ENCODE measurements at regions of chr6 and their contacts with region 1.

Region 1: DNA sequence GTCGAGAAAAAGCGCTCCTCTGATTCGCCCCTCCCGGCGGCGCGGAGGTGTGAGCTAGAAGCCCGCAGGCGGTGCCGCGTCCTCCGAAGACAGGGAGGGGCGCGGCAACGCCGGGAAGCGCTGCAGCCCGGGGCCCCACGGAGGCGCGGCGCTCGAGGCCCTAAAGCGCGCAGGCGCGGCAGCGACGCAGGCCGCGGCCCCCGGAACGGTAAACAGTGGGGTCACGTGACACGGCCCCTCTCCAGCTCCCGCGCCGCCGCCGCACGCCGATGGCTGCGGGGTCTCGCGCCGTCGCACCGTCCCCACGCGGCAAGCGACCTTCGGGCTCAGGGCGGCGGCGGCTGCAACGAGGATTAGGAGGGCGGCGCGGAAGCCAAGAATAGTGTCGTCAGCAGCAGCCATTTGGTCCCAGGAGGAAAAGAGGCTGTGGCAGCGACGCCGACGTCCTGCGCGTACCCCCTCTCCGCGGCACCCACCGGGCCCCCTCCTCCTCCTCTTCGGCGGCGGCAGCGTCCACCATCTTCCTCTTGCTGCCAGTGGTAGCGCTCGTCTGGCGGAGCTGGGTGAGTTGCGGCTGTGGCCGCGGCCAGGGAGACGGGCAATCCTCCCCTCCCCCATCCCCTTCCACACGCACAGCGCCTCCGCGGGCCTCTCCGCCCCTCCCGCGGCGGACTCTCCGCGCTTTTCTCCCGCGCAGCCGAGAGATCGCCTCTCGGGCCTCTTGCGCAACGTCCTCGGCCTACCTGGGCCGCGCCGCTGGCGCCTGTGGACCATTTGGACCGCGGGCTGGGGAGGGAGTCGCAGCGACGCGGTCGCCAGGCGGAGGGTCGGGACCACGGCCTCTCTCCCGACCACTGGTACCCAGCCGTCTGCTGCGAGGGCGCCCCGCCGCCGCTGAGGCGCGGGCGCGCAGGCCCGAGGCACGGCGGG is at the start of gene PHF3:
- DNase-seq: peak; percentile 89
- H3K4me3 ChIP-seq: peak within 1 kb of the TSS; percentile 85 to 91
- H3K27ac ChIP-seq: peak within 1 kb of the TSS; percentile 98 to 99
- H3K4me1 ChIP-seq: peaks cover 6% of the 10 kb centered on the region
- H3K27me3 ChIP-seq: no peaks in the 10 kb centered on the region
- CTCF ChIP-seq: peak in 2 of 4 experiments; percentile 34 to 37
- POLR2A ChIP-seq: peak; percentile 61
- total RNA-seq, gene PHF3: 47.6 to 63.9 TPM

Region 2: GRCh38 chr6:63418741-63419140 is 217.1 kb before region 1 on chr6:
- intact Hi-C with region 1: no loop called
- DNase-seq: no peak
- H3K4me3 ChIP-seq: no peak overlapping the region
- H3K27ac ChIP-seq: no peak overlapping the region
- H3K4me1 ChIP-seq: no peaks in the 10 kb centered on the region
- H3K27me3 ChIP-seq: no peaks in the 10 kb centered on the region
- CTCF ChIP-seq: no peak
- POLR2A ChIP-seq: no peak

Region 3: GRCh38 chr6:63571881-63572732 is 63.7 kb before region 1 on chr6 and contains the starts of genes LOC128125822 and PTP4A1:
- intact Hi-C with region 1: loop called (anchors 5 kb)
- DNase-seq: peak; percentile 98
- H3K4me3 ChIP-seq: peak within 1 kb of the TSS; percentile 73 to 99
- H3K27ac ChIP-seq: peak within 1 kb of the TSS; percentile 100
- H3K4me1 ChIP-seq: no peaks in the 10 kb centered on the region
- H3K27me3 ChIP-seq: no peaks in the 10 kb centered on the region
- CTCF ChIP-seq: peak in 1 of 4 experiments; percentile 24
- POLR2A ChIP-seq: peak; percentile 100
- total RNA-seq, gene PTP4A1: 25.5 to 29.3 TPM

Region 4: GRCh38 chr6:63816982-63817436 is 181.2 kb after region 1 on chr6:
- intact Hi-C with region 1: no loop called
- DNase-seq: no peak
- H3K4me3 ChIP-seq: no peak overlapping the region
- H3K27ac ChIP-seq: no peak overlapping the region
- H3K4me1 ChIP-seq: no peaks in the 10 kb centered on the region
- H3K27me3 ChIP-seq: no peaks in the 10 kb centered on the region
- CTCF ChIP-seq: no peak
- POLR2A ChIP-seq: no peak